ENCODE measurements at regions of chr3 and their contacts with region 1.

Region 1: DNA sequence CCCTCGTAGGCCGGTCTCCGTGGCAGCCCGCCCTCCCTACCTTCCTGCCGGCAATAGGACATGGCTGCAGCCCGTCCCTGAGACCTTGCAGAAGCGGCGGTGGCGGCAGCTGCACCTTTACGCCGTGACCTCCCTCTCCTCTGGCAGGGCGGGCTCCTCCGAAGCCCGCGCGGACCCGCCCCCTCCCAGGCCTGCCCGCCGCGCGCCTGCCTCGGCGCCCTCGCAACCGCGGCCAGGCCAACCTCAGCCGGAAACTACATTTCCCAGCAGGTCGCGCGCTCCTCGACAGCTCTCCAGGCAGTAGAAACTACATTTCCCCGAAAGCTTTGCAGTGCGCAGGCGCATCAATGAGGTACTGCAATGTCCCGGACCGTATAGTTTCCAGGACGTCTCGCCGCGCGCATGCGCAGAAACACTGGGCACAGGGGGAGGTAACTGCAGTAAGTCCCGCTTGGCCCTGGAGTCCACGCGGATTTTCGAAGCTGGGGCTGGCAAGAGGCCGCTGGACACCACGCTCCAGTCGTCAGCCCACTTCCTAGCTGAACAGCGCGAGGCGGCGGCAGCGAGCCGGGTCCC is at the starts of genes CHCHD4 and TMEM43:
- DNase-seq: peak; percentile 96 to 98
- H3K4me3 ChIP-seq: peak within 1 kb of the TSS; percentile 87
- H3K27ac ChIP-seq: peak within 1 kb of the TSS; percentile 69
- H3K4me1 ChIP-seq: peaks cover 24% of the 10 kb centered on the region
- H3K27me3 ChIP-seq: no peaks in the 10 kb centered on the region
- CTCF ChIP-seq: no peak
- total RNA-seq, gene CHCHD4: 14.4 and 17.6 TPM in 2 replicates
- total RNA-seq, gene TMEM43: 62.3 and 64.7 TPM in 2 replicates

Region 2: GRCh38 chr3:12471243-12471651 is 1653.5 kb before region 1 on chr3:
- CTCF ChIA-PET with region 1: no interaction called
- POLR2A ChIA-PET with region 1: interaction called, 16 read pairs
- intact Hi-C with region 1: no loop called
- DNase-seq: peak; percentile 76 to 92
- H3K4me3 ChIP-seq: no peak overlapping the region
- H3K27ac ChIP-seq: peak overlapping the region; percentile 92
- H3K4me1 ChIP-seq: peaks cover 66% of the 10 kb centered on the region
- H3K27me3 ChIP-seq: no peaks in the 10 kb centered on the region
- CTCF ChIP-seq: peak; percentile 64

Region 3: GRCh38 chr3:14016885-14017475 is 107.7 kb before region 1 on chr3:
- CTCF ChIA-PET with region 1: no interaction called
- POLR2A ChIA-PET with region 1: interaction called, 7 read pairs
- intact Hi-C with region 1: loop called (anchors 2 kb)
- DNase-seq: peak; percentile 79 to 88
- H3K4me3 ChIP-seq: no peak overlapping the region
- H3K27ac ChIP-seq: 0 out of 2 replicates have a peak overlapping the region, but pooled peaks have one; percentile 24
- H3K4me1 ChIP-seq: peaks cover 7% of the 10 kb centered on the region; the same call in 1 of the 2 replicates
- H3K27me3 ChIP-seq: no peaks in the 10 kb centered on the region; the same call in 1 of the 2 replicates
- CTCF ChIP-seq: no peak

Region 4: DNA sequence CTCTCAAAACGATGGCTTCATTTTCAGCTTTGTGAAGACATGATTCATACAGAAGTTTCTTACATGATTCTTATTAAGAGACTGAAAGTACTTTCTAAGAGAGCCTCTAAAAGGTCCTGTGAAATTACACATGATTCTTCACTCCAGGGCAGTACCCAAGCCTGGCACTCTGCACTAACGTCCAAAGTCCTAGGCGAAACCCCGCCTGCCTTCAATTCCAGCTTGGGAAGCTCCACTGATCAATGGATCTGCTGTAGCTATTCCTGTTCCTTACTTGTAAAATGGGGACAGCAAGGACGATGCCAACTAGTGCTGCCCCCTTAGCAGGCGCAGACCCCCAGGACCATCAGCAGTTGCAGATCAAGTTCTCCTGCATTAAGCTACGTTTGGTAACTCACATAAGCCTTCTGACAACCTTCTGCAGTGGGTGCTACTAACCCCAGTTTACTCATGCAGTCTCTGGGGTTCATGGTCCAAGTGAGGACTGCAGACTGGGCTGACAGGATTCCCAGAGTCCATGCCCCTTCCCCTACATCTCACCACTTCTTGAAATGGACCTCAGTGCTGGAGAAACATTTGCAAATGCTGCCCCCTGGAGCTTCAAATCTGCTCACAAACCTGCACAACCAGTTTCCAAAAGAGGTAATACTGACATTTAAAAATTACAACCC is 10.6 kb before region 1 on chr3:
- CTCF ChIA-PET with region 1: no interaction called
- POLR2A ChIA-PET with region 1: interaction called, 12 read pairs
- intact Hi-C with region 1: no loop called
- DNase-seq: peak in 1 of 2 experiments; percentile 42
- H3K4me3 ChIP-seq: no peak overlapping the region
- H3K27ac ChIP-seq: no peak overlapping the region
- H3K4me1 ChIP-seq: peaks cover 9% of the 10 kb centered on the region
- H3K27me3 ChIP-seq: no peaks in the 10 kb centered on the region
- CTCF ChIP-seq: peak; percentile 62

Region 5: DNA sequence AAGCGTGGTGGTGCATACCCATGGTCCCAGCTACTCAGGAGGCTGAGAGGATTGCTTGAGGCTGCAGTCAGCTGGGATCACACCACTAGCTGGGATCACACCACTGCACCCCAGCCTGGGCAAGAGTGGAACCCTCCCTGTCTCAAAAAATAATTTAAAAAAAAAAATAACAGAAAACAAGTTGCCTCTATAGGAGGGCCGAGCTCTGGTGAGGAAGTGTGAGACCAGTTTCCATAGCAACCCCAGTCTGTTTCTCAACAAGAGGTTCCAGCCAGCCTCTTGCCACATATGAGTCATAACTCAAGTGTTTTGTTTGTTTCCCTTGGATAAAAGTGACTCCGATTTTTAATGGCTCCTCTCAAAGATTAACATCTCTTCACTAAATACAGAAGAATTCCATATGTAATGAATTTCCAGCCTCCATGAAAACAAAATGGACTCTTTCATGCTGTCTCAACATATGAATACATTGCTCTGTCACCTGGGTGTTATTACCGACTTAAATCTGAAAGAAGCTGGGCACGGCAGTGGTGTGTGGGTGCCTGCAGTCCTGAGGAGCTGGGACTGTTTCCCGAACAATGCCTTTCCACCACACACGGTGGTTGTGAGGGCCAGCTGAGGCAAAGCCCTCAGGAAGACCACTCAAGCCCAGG is 19.8 kb after region 1 on chr3:
- CTCF ChIA-PET with region 1: interaction called, 3 read pairs
- POLR2A ChIA-PET with region 1: interaction called, 26 read pairs
- intact Hi-C with region 1: loop called (anchors 1 kb)
- DNase-seq: peak; percentile 74 to 96
- H3K4me3 ChIP-seq: peak overlapping the region; percentile 51
- H3K27ac ChIP-seq: peak overlapping the region; percentile 88
- H3K4me1 ChIP-seq: peaks cover 44% of the 10 kb centered on the region
- H3K27me3 ChIP-seq: no peaks in the 10 kb centered on the region
- CTCF ChIP-seq: no peak

Region 6: GRCh38 chr3:14289590-14290461 is 165.1 kb after region 1 on chr3:
- CTCF ChIA-PET with region 1: no interaction called
- POLR2A ChIA-PET with region 1: no interaction called
- intact Hi-C with region 1: no loop called
- DNase-seq: peak in 1 of 2 experiments; percentile 73
- H3K4me3 ChIP-seq: no peak overlapping the region
- H3K27ac ChIP-seq: no peak overlapping the region
- H3K4me1 ChIP-seq: peaks cover 11% of the 10 kb centered on the region
- H3K27me3 ChIP-seq: no peaks in the 10 kb centered on the region
- CTCF ChIP-seq: no peak

Measured in PC-9 (cell line).